MCF 10A (cell line): ENCODE measurements at regions of chr5 and their contacts with region 1.

Region 1: DNA sequence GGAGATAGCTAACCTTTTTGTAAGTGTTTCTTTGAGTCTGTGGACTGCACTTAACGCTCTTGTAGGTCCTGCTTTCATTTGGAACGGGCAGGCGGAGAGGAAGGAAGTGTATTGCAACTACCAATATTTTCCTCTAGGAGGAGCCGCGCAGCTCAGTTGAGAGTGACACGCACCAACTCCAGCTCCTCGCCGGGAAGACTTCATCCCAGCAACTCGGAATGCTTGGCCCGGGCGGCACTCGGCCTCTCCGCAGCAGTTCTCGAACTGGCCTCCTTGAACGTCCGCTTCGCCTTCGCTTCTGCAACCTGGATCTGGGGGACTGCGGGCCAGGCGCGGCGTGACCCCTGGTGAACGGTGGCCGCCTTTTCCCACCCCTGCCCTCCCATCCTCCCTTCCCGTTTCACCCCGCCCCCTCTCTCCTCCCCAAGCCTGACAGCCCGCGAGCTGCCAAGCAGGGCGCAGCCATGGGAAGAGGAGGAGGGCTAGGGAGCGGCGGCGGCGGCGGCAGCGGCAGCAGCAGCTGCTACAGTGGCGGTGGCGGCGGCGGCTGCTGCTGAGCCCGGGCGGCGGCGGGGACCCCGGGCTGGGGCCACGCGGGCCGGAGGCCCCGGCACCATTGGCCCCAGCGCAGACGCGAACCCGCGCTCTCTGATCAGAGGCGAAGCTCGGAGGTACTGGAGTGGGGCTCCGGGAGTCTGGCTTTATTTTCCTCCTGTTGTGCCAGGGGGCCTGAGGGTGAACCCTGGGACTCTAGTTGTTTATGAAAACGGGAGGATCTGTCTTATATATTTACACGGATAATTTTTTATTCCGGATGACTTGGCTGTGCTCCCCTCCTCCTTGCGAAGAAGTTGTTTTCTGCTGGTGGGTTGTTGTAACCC is at the start of gene GHR:
- DNase-seq: peak; percentile 93
- H3K4me3 Mint-ChIP-seq: no peak within 1 kb of the TSS
- H3K27ac Mint-ChIP-seq: no peak within 1 kb of the TSS
- H3K4me1 Mint-ChIP-seq: no peaks in the 10 kb centered on the region
- H3K27me3 Mint-ChIP-seq: no peaks in the 10 kb centered on the region
- CTCF ChIP-seq: peak; percentile 69
- total RNA-seq, gene GHR: 1.8 and 1.9 TPM in 2 replicates

Region 2: GRCh38 chr5:42495914-42496313 is 72.4 kb after region 1 on chr5:
- CTCF ChIA-PET with region 1: interaction called, 13 read pairs
- POLR2A ChIA-PET with region 1: interaction called, 23 read pairs
- intact Hi-C with region 1: no loop called
- DNase-seq: peak; percentile 85
- H3K4me3 Mint-ChIP-seq: no peak overlapping the region
- H3K27ac Mint-ChIP-seq: no peak overlapping the region
- H3K4me1 Mint-ChIP-seq: peaks cover 46% of the 10 kb centered on the region
- H3K27me3 Mint-ChIP-seq: no peaks in the 10 kb centered on the region
- CTCF ChIP-seq: no peak

Region 3: GRCh38 chr5:42514754-42515153 is 91.2 kb after region 1 on chr5:
- CTCF ChIA-PET with region 1: interaction called, 11 read pairs
- POLR2A ChIA-PET with region 1: no interaction called
- intact Hi-C with region 1: no loop called
- DNase-seq: peak; percentile 29
- H3K4me3 Mint-ChIP-seq: no peak overlapping the region
- H3K27ac Mint-ChIP-seq: no peak overlapping the region
- H3K4me1 Mint-ChIP-seq: peaks cover 5% of the 10 kb centered on the region
- H3K27me3 Mint-ChIP-seq: no peaks in the 10 kb centered on the region
- CTCF ChIP-seq: peak; percentile 11

Region 4: GRCh38 chr5:42767491-42768105 is 344.1 kb after region 1 on chr5:
- CTCF ChIA-PET with region 1: interaction called, 9 read pairs
- POLR2A ChIA-PET with region 1: no interaction called
- intact Hi-C with region 1: loop called (anchors 2 kb)
- DNase-seq: peak; percentile 58
- H3K4me3 Mint-ChIP-seq: no peak overlapping the region
- H3K27ac Mint-ChIP-seq: no peak overlapping the region
- H3K4me1 Mint-ChIP-seq: peaks cover 1% of the 10 kb centered on the region
- H3K27me3 Mint-ChIP-seq: no peaks in the 10 kb centered on the region
- CTCF ChIP-seq: peak; percentile 64